Thyroid gland (tissue), 4 donors: ENCODE measurements at regions of chr1 and their contacts with region 1.

Region 1: DNA sequence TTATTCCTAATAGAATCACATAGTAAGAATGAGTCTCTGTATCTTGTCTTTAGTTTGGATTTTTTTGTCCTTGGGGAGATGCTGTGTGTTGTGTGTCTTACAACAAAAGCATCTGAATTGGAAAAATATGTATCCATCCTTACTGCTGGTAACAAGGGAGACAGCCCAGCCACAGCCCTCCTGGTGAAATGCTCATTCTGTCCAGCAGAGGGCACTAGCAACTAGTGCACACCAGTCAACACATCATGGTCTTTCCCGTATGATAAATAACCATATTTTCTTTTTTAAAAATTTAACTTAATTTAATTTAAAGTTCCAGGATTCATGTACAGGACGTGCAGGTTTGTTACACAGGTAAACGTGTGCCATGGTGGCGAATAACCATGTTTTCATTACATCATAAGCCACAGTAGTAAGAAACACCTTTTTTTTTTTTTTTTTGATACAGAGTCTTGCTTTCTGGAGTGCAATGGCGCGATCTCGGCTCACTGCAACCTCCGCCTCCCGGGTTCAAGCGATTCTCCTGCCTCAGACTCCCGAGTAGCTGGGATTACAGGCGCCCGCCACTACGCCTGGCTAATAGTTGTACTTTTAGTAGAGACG is 245.1 kb downstream of the PTBP2 start:
- DNase-seq: peak; percentile 59 to 67
- H3K4me3 ChIP-seq: no peak overlapping the region
- H3K27ac ChIP-seq: no peak overlapping the region
- H3K4me1 ChIP-seq: no peaks in the 10 kb centered on the region
- H3K27me3 ChIP-seq: no peaks in the 10 kb centered on the region
- CTCF ChIP-seq: peak; percentile 61 to 90 (median 66)
- POLR2A ChIP-seq: no peak

Region 2: DNA sequence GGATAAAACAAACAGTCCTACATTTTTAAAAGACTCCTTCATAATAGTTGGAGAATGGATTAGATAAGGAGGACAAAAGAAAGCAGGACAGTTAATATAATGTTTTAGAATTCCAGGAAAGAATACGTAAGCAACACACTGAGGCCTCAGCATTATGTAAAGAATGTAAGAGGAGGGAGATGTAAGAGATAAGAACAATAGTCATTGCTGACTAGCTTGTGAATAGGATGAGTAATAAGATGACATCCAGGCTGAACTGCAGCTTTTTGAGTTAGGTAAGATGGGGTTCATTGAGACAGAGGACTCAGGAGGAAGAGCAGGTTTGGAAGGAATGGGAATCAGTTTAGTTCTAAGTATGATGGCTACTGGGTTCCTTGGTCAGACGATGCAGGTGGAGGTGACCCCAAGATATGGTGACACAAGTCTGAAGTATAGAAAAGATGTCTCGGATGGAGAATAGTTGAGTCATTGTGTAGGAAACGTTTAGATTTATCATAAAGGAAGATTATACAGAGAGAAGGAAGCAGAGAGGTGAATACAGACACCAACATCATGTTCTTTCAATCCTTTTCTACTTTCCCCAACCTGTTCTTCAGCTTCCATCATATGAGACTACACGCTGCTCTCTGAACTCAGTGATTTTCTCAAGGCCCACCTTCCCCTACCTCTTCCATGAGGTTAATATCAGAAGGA is 127.8 kb after region 1 on chr1:
- intact Hi-C with region 1: no loop called
- DNase-seq: no peak
- H3K4me3 ChIP-seq: no peak overlapping the region
- H3K27ac ChIP-seq: no peak overlapping the region
- H3K4me1 ChIP-seq: no peaks in the 10 kb centered on the region
- H3K27me3 ChIP-seq: no peaks in the 10 kb centered on the region
- CTCF ChIP-seq: no peak
- POLR2A ChIP-seq: no peak

Region 3: DNA sequence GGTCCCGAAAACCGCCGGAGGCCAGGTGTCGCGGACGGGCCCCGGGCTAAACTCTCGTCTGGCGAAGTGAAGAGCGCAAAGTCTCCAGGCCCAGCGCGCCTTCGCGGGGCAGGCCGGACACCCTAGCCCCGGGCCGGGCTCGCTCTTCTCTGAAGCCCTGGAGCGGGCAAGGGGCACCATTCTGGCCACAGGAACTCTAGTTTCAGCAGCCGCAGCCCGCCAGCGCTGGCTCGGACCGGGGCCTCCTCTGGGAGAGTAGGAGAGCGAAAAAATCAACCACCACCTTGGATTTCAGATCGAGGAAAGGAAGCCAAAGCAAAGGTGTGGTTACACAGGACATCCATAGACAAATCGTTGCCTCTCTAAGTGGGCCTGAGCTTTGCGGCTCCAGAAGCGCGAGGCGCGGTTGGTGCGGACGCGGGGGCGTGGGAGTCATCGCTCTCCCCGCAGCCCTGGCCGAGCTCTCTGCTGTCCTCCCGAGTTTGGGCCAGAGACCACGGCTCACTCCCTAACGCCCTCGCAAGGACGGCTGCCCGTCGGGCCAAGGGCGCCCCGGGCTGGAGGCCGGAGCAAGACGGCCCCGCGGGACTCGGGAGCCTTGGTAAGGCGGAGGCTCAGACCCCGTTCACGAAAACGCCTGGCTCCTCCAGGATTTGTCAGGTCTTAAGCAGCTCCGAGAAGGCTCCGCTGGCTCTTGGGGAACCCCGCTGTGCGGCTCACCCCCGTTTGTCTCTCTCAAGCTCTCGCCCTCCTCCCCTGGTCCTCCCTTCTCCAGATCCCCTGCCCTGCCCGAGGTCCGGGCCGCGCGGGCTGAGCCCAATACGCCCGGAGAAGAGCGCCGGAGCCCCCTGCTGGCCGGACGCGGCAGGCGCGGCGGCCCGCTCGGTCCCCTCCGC is 1087.1 kb after region 1 on chr1:
- intact Hi-C with region 1: loop called (anchors 10 kb)
- DNase-seq: peak; percentile 35 to 54
- H3K4me3 ChIP-seq: peak overlapping the region in 2 of 3 donors; percentile 7 to 23
- H3K27ac ChIP-seq: no peak overlapping the region
- H3K4me1 ChIP-seq: peaks cover 6 to 13% of the 10 kb centered on the region in 2 donors
- H3K27me3 ChIP-seq: peaks cover 11% of the 10 kb centered on the region
- CTCF ChIP-seq: peak; percentile 16 to 96 (median 69)
- POLR2A ChIP-seq: no peak